ENCODE measurements at regions of chr16 and their contacts with region 1.

Region 1: DNA sequence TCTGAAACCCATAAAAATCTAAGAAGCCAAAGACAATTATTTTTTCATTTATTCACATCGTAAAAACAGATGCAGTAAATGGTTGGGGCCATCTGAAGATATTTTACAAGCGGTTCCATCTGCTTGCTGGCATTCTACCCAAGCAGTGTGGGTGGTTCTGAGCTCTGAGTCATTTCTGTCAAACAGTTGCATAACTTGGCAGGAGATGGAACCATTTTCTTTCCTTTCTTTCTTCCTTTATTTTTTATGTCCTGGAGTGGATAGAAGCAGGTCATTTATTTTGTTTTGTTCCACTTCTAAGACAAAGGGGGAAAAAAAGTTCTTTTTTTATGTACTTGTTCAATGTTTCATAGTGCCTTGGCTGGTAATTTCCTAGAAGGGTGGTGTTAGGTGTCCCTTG is 1151.9 kb upstream of the GOT2 start:
- DNase-seq: no peak
- CTCF ChIP-seq: no peak

Region 2: DNA sequence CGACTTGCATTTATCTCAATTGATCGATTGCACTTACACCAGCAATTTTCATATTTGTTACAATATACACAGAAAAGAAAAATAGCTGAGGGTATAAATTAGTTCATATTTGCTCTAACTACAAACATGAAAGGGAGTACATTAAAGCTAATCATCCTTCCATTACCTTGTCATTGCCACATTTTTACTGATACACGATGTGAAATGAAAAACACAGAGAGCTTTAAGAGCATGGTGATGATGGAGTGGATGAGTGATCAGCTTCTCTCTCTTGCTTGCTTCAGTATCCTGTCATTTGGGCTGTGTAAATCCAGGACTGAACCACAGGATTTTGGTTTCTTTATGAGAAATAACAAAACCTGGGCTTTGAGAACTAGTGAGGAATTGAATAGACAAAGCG is 55.6 kb after region 1 on chr16:
- in situ Hi-C with region 1: loop called (anchors 10 kb)
- DNase-seq: no peak
- CTCF ChIP-seq: no peak

Measured in GM13976 (cell line).